Activated B cell treated with CpG ODN at 0.5 μM for 24 hours (primary cell): ENCODE measurements at regions of chr14 and their contacts with region 1.

Region 1: GRCh38 chr14:90256354-90257131 is at the start of gene PSMC1:
- DNase-seq: peak; percentile 76
- ATAC-seq: peak; percentile 94
- H3K4me3 Mint-ChIP-seq: peak within 1 kb of the TSS; percentile 98
- H3K27ac Mint-ChIP-seq: peak within 1 kb of the TSS; percentile 92
- H3K4me1 Mint-ChIP-seq: peaks cover 40% of the 10 kb centered on the region
- H3K27me3 Mint-ChIP-seq: no peaks in the 10 kb centered on the region
- CTCF ChIP-seq: no peak
- total RNA-seq, gene PSMC1: 101 and 102 TPM in 2 replicates

Region 2: DNA sequence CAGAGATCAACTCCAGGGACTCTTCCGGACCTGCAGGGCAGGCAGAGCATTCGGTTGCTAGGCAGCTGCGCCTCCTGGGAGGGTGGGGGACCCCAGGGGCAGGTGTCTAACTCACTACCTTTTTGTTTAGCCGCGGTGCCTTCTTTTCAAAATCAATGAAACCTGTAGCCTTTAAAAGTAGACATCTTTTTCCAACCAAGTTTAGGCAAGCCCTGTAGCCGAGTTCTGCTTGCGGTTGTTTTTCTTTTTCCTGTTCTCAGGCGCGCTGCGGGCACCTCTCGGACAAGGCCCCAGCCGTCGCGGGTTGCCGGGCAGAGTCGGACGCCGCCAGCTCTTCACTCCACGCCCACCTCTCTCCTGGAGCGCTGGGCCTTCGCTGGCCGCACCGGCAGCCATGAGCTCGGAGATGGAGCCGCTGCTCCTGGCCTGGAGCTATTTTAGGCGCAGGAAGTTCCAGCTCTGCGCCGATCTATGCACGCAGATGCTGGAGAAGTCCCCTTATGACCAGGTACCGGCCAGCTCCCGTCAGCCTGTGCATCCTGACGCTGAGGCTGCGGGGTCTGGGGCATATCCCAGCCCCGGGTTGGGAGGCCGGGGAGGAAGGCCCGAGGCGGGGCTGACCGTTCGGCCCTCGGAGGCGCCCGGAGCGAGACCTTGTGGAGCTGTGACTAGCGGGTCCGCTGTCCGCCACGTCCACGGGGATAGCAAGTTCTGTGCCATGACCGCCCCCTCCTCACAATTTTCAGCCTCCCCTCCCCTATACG is 1432.0 kb before region 1 on chr14 and contains the start of gene TTC8:
- CTCF ChIA-PET with region 1: no interaction called
- POLR2A ChIA-PET with region 1: interaction called, 4 read pairs
- intact Hi-C with region 1: loop called (anchors 10 kb)
- DNase-seq: peak; percentile 77
- ATAC-seq: peak; percentile 97
- H3K4me3 Mint-ChIP-seq: peak within 1 kb of the TSS; percentile 88
- H3K27ac Mint-ChIP-seq: peak within 1 kb of the TSS; percentile 100
- H3K4me1 Mint-ChIP-seq: peaks cover 14% of the 10 kb centered on the region
- H3K27me3 Mint-ChIP-seq: peaks cover 11% of the 10 kb centered on the region
- CTCF ChIP-seq: no peak
- total RNA-seq, gene TTC8: 4.8 and 6.0 TPM in 2 replicates

Region 3: GRCh38 chr14:90060312-90060964 is 196.1 kb before region 1 on chr14:
- CTCF ChIA-PET with region 1: no interaction called
- POLR2A ChIA-PET with region 1: no interaction called
- intact Hi-C with region 1: loop called (anchors 10 kb)
- DNase-seq: peak; percentile 28
- ATAC-seq: peak; percentile 67
- H3K4me3 Mint-ChIP-seq: peak overlapping the region; percentile 66
- H3K27ac Mint-ChIP-seq: no peak overlapping the region
- H3K4me1 Mint-ChIP-seq: peaks cover 36% of the 10 kb centered on the region
- H3K27me3 Mint-ChIP-seq: peaks cover 60% of the 10 kb centered on the region
- CTCF ChIP-seq: no peak

Region 4: DNA sequence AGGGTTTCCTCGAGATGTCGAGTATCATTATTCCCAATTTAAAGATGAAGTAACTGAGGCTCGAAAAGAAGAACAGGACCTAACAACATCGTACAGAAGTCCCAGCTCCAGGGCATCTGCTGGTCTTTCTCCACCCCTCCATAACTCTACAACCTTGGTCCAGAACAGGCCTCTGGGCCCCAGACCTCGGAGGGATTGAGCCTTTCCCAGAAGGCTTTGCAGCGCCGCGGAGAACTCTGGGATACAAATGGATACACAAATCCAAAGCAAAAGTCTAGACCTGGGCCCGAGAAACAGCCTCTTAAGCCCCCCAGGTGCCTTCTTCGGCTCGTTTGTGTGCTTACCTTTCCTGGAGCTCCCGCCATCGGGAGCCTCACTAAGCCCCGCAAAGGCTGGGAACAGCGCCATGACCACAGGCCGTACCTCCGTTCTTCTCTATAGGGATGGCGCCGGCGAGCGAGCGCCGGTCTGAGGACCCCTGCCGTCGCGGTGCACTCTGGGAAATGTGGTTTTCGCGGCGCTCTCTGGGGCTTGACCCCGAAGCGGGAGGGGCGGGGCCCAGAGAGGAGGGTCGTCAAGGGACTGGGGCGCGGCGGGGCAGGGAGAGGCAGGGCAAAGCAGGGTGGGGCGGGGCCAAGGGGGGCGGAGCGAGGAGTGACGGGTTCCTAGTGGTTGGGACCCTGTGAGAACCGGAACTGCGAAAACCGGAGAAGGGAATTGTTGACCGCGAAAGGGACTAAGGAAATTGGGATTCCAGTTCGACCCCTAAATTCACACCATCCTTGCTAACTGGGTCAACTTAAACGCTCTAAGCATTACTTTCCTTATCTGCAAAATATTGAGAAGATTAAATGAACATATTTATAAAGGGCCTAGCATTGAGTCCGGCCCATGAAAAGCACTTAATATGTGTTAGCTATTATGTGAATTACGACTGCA is 75.2 kb after region 1 on chr14 and contains the start of gene NRDE2:
- CTCF ChIA-PET with region 1: no interaction called
- POLR2A ChIA-PET with region 1: no interaction called
- intact Hi-C with region 1: loop called (anchors 1 kb)
- DNase-seq: peak; percentile 95
- ATAC-seq: peak; percentile 98
- H3K4me3 Mint-ChIP-seq: peak within 1 kb of the TSS; percentile 93
- H3K27ac Mint-ChIP-seq: peak within 1 kb of the TSS; percentile 95
- H3K4me1 Mint-ChIP-seq: peaks cover 25% of the 10 kb centered on the region
- H3K27me3 Mint-ChIP-seq: peaks cover 19% of the 10 kb centered on the region
- CTCF ChIP-seq: no peak
- total RNA-seq, gene NRDE2: 35.3 and 37.1 TPM in 2 replicates